Endothelial cell of umbilical vein (primary cell): ENCODE measurements at regions of chr5 and their contacts with region 1.

Region 1: DNA sequence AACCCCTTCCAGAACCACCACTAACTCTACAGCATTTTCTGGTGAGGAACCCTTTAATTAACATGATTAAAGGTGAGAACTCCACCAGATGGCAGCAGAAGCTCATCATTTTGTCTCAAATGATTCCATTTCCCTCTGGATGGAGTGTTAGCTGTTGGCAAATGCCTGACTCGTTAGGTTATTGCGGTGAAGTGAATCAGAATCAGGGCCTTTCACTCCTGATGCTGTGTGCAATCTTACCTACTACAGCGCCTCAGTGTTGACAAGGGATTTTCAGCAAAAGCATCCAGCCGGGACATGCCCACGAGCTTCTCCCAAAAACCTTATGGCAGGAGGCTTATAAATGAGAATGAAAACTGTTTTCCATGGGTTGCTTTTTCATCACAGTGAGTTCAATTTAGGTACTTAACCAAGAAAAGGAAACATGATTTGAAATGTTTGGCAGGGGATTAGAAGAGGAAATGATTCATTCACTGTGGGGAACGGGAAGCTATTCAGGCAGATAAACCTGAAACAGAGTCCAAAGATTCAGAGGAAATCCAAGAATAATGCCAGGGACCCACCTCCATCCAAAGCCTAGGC is 48.0 kb upstream of the CAST start:
- DNase-seq: peak; percentile 92
- H3K4me3 ChIP-seq: peak overlapping the region in 2 of 3 experiments; percentile 25 to 72
- H3K27ac ChIP-seq: peak overlapping the region; percentile 92
- H3K4me1 ChIP-seq: peaks cover 28% of the 10 kb centered on the region
- H3K27me3 ChIP-seq: no peaks in the 10 kb centered on the region
- CTCF ChIP-seq: peak; percentile 33 to 51
- POLR2A ChIP-seq: no peak

Region 2: GRCh38 chr5:96264047-96264446 is 350.2 kb before region 1 on chr5:
- CTCF ChIA-PET with region 1: no interaction called
- POLR2A ChIA-PET with region 1: no interaction called
- dilution Hi-C with region 1: no loop called
- intact Hi-C with region 1: no loop called
- DNase-seq: no peak
- H3K4me3 ChIP-seq: no peak overlapping the region
- H3K27ac ChIP-seq: no peak overlapping the region
- H3K4me1 ChIP-seq: peaks cover 12% of the 10 kb centered on the region
- H3K27me3 ChIP-seq: no peaks in the 10 kb centered on the region
- CTCF ChIP-seq: no peak
- POLR2A ChIP-seq: no peak

Region 3: DNA sequence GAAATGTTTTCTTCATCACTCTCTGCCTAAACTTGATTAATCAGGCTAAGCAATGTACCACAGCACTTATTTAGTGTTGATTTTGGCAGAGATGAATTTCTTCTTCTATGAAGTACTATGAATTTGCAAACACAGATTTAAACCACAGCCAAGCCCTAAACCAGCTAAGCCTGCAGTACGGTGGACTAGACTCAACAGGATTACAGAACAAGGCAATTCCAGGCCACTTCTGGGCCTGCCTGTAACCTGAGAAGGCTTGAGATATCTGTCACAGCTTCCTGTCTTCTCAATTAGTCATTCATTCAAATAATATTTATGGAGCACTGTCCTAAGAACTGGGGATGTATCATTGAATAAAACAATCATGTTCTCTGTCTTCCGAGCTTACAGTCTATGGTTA is 15.6 kb after region 1 on chr5:
- CTCF ChIA-PET with region 1: interaction called, 14 read pairs
- POLR2A ChIA-PET with region 1: no interaction called
- dilution Hi-C with region 1: no loop called
- intact Hi-C with region 1: no loop called
- DNase-seq: peak; percentile 44
- H3K4me3 ChIP-seq: no peak overlapping the region
- H3K27ac ChIP-seq: no peak overlapping the region
- H3K4me1 ChIP-seq: peaks cover 12% of the 10 kb centered on the region
- H3K27me3 ChIP-seq: no peaks in the 10 kb centered on the region
- CTCF ChIP-seq: no peak
- POLR2A ChIP-seq: no peak

Region 4: GRCh38 chr5:96687812-96688453 is 73.7 kb after region 1 on chr5:
- CTCF ChIA-PET with region 1: interaction called, 74 read pairs
- POLR2A ChIA-PET with region 1: no interaction called
- dilution Hi-C with region 1: no loop called
- intact Hi-C with region 1: loop called (anchors 1 kb)
- DNase-seq: peak; percentile 81
- H3K4me3 ChIP-seq: peak overlapping the region in 1 of 3 experiments; percentile 49
- H3K27ac ChIP-seq: peak overlapping the region; percentile 27
- H3K4me1 ChIP-seq: peaks cover 9% of the 10 kb centered on the region
- H3K27me3 ChIP-seq: no peaks in the 10 kb centered on the region
- CTCF ChIP-seq: peak; percentile 42 to 48
- POLR2A ChIP-seq: no peak

Region 5: DNA sequence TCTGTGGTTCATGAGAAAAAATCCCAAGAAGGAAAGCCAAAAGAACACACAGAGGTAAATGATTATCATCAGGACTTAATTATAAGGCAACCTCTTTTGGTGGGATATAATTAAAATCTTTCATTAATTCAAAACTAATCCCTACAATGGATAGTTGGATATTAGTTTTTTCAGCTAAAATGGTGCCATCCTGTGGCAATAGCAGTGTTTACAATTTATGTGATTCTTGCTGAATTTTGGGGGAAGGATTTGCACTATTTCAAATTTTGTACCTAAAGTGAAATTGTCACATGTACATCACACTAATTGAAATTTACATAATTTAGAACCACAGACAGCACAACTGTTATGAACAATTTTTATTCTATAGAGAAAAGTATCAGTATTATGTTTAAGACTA is 115.0 kb after region 1 on chr5:
- CTCF ChIA-PET with region 1: interaction called, 31 read pairs
- POLR2A ChIA-PET with region 1: no interaction called
- dilution Hi-C with region 1: no loop called
- intact Hi-C with region 1: loop called (anchors 1 kb)
- DNase-seq: no peak
- H3K4me3 ChIP-seq: no peak overlapping the region
- H3K27ac ChIP-seq: no peak overlapping the region
- H3K4me1 ChIP-seq: no peaks in the 10 kb centered on the region
- H3K27me3 ChIP-seq: no peaks in the 10 kb centered on the region
- CTCF ChIP-seq: no peak
- POLR2A ChIP-seq: no peak

Region 6: GRCh38 chr5:96743065-96743768 is 129.0 kb after region 1 on chr5:
- CTCF ChIA-PET with region 1: interaction called, 22 read pairs
- POLR2A ChIA-PET with region 1: no interaction called
- dilution Hi-C with region 1: no loop called
- intact Hi-C with region 1: loop called (anchors 1 kb)
- DNase-seq: peak; percentile 71
- H3K4me3 ChIP-seq: no peak overlapping the region
- H3K27ac ChIP-seq: peak overlapping the region; percentile 82
- H3K4me1 ChIP-seq: peaks cover 23% of the 10 kb centered on the region
- H3K27me3 ChIP-seq: no peaks in the 10 kb centered on the region
- CTCF ChIP-seq: no peak
- POLR2A ChIP-seq: no peak

Region 7: DNA sequence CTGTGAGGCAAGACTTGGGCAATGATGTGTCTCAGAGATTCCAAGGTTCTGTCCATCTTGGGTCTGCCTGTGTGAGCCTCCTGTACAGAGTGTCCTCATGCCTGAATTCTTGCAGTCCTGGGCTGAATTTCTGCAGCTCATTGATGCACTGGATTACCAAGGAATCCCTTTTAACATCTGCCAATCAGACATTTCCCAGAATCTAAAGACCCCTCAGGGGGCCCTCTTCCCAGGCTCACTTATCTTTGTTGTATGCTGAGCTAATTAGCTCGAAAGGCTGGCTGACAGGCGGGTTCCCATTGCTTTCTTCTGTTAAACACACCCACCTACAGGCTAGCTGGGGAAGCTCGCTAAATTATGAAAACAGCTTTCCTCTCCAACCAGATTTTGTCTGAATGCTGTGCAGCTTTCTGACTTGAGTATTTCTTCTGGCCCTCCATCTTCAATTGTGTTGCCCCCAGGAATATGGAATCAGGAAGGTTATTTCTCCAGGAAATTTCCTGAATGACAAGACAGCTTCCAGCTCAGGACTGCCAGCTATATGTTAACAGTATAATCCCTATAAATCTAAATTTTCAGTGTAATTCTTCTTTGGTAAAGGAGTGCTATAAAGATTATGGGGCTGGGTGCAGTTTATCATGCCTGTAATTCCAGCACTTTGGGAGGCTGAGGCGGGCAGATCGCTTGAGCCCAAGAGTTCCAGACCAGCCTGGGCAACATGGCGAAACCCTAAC is 528.5 kb after region 1 on chr5 and contains the start of gene LIX1:
- CTCF ChIA-PET with region 1: interaction called, 12 read pairs
- POLR2A ChIA-PET with region 1: no interaction called
- dilution Hi-C with region 1: no loop called
- intact Hi-C with region 1: loop called (anchors 5 kb)
- DNase-seq: peak; percentile 50
- H3K4me3 ChIP-seq: no peak within 1 kb of the TSS
- H3K27ac ChIP-seq: no peak within 1 kb of the TSS
- H3K4me1 ChIP-seq: no peaks in the 10 kb centered on the region
- H3K27me3 ChIP-seq: peaks cover 5 to 13% of the 10 kb centered on the region in 2 experiments
- CTCF ChIP-seq: peak; percentile 52 to 53
- POLR2A ChIP-seq: no peak
- total RNA-seq, gene LIX1: not detected in 2 replicates